ENCODE measurements at regions of chr6 and their contacts with region 1.

Region 1: DNA sequence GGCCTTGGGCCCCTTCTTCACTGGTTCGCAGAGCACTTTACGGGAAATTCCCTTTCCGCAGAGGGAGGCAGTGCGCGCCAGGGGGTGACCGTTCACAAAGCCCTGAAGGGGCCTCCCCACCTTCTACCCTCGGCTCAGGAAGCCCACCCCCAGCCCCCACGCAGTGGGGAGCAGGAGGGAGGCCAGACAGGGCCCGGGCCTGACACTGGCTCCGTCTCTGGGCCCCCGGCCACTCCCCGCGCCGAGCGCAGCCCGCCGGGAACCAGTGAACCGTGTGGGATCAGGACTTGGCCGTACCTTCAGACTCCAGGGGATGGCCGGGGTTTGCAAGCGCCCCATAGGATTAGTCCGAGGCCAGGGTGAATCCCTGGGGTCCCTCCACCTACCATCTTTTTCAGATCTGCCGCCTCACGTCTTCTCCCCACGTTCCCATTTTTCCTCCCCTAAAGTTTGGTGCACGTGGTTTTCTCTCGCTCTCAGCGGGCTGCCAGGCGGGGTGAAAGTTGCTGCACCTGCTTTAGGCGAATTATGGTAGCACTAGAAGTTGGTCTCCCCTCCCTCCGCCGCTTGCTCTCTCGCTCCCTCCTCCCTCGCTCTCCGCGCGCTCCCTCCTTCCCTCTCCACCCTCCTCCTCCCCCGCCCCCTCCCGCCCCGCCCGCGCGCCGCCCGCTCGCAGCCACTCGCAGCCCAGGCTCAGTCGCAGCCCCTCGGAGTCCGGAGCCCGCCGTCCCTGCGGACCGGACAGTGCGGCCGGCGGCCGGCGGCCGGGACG is at the start of gene FOXP4:
- DNase-seq: peak; percentile 89 to 90
- ATAC-seq: peak; percentile 86 to 94 (median 92)
- H3K4me3 ChIP-seq: peak within 1 kb of the TSS; percentile 65 to 97 (median 78)
- H3K27ac ChIP-seq: peak within 1 kb of the TSS; percentile 71 to 87 (median 82)
- H3K4me1 ChIP-seq: peaks cover 11 to 47% (median 32%) of the 10 kb centered on the region in 9 donors
- H3K27me3 ChIP-seq: peaks cover 0 to 46% (median 14%) of the 10 kb centered on the region in 7 donors
- CTCF ChIP-seq: no peak
- total RNA-seq, gene FOXP4: 12.7 to 18.0 (median 13.7) TPM

Region 2: DNA sequence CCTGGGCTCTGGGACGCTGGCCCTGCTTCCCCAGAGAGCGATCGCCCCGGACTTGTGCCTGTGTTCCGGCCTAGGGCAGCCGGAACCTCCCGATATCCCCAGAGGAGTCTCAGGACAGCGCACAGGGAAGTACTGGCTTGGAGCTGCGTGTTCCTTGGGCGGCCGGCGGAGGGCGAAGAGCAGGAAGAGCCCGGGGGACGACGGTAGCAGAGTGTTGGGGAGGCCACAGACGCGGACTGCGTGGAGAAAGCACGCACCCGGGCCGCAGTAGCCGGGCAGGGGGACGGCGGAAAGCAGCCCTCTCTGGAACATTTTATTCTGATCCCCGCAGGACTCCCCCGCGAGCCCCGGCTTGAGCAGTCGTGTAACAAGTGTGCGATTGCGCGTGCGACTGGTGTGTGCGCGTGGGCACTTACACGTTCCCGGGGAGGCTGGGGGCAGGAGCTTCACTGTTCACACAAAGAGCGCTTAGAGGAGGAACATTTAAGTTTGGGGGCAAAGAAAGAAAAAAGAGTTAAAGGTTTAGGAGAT is 174.4 kb before region 1 on chr6:
- intact Hi-C with region 1: no loop called
- DNase-seq: peak; percentile 50 to 55
- ATAC-seq: peak; percentile 57 to 82 (median 76)
- H3K4me3 ChIP-seq: peak overlapping the region in 9 of 10 donors; percentile 16 to 48 (median 41)
- H3K27ac ChIP-seq: peak overlapping the region in 7 of 10 donors; percentile 25 to 77 (median 67)
- H3K4me1 ChIP-seq: peaks cover 5 to 56% (median 45%) of the 10 kb centered on the region in 9 donors
- H3K27me3 ChIP-seq: peaks cover 15 to 97% (median 85%) of the 10 kb centered on the region in 7 donors
- CTCF ChIP-seq: peak in 8 of 9 donors; percentile 5 to 49 (median 31)

Region 3: GRCh38 chr6:41505122-41506049 is 40.5 kb before region 1 on chr6:
- intact Hi-C with region 1: loop called in 1 of 10 experiments (anchors 5 kb)
- DNase-seq: peak; percentile 77
- ATAC-seq: peak; percentile 75 to 84 (median 80)
- H3K4me3 ChIP-seq: peak overlapping the region in 9 of 10 donors; percentile 24 to 54 (median 44)
- H3K27ac ChIP-seq: peak overlapping the region in 9 of 10 donors; percentile 39 to 81 (median 71)
- H3K4me1 ChIP-seq: peaks cover 5 to 34% (median 20%) of the 10 kb centered on the region in 9 donors
- H3K27me3 ChIP-seq: peaks cover 0 to 80% (median 56%) of the 10 kb centered on the region in 7 donors
- CTCF ChIP-seq: no peak

Region 4: DNA sequence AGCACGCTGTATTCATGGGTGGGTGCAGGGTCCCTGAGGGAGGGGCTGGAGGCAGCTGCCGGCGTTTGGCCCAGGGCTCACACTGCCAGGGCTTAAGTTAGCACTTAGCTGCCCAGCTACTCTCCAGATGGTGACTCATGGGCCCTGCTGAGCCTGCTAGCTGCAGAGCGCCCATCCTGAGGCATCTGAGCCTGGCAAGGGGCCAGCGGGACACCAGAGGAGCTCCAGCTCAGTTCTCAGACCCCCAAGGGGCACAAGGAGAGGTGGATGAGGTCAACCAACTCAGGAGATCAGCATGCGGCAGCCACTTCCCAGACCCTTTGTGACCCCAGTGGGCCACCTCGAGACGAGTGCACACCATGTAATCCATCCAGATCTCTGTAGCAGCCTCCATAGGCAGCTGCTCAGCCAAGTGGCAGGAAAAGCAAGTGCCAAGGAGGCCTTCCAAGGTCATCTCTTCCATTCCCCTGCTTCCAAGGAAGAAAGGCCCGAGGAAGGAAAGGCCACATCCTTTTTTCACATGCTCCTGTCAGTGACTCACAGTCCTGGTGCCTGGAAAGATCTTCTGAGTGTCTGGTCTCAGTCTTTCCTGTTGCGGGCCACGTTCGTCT is 35.6 kb after region 1 on chr6:
- intact Hi-C with region 1: loop called in 1 of 10 experiments (anchors 5 kb)
- DNase-seq: peak; percentile 33 to 62
- ATAC-seq: peak in 6 of 8 donors; percentile 22 to 76 (median 56)
- H3K4me3 ChIP-seq: no peak overlapping the region
- H3K27ac ChIP-seq: peak overlapping the region in 2 of 10 donors; percentile 30 to 53
- H3K4me1 ChIP-seq: peaks cover 7 to 72% (median 35%) of the 10 kb centered on the region in 9 donors
- H3K27me3 ChIP-seq: no peaks in the 10 kb centered on the region
- CTCF ChIP-seq: no peak

Region 5: DNA sequence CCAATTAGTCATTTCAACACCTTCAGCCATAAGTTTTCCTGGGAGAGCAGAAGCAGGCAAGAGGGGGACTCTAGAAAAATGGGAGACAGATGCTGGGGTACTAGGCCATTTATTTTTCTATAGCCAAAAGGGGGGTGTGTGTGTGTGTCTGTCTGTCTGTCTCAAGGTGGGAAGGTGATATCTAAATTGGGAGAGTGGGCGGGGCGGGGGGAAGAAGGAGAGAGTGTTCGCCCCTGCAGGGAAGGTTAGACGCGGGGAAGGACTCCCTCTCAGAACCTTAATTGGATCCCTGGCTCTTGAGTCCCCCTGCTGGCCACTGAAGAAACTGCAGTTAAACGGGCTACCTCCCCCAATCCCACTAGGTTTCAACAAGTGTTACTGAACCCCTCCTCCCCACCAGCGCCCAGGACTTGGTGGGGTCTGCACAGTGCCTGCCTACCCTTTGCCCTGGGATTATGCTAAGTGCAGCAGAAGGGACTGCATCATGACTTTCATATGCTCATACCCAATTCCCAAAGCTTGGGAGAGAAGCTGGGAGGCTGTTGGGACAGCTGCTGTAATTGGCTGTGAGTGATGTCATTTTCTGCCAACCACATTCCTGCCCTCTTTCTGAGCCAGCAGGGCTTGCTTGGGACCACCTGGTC is 46.1 kb after region 1 on chr6:
- intact Hi-C with region 1: loop called in 1 of 10 experiments (anchors 5 kb)
- DNase-seq: peak; percentile 72 to 73
- ATAC-seq: peak; percentile 37 to 81 (median 60)
- H3K4me3 ChIP-seq: no peak overlapping the region
- H3K27ac ChIP-seq: no peak overlapping the region
- H3K4me1 ChIP-seq: peaks cover 0 to 8% (median 0%) of the 10 kb centered on the region in 9 donors
- H3K27me3 ChIP-seq: no peaks in the 10 kb centered on the region
- CTCF ChIP-seq: peak; percentile 90 to 97 (median 92)

Region 6: DNA sequence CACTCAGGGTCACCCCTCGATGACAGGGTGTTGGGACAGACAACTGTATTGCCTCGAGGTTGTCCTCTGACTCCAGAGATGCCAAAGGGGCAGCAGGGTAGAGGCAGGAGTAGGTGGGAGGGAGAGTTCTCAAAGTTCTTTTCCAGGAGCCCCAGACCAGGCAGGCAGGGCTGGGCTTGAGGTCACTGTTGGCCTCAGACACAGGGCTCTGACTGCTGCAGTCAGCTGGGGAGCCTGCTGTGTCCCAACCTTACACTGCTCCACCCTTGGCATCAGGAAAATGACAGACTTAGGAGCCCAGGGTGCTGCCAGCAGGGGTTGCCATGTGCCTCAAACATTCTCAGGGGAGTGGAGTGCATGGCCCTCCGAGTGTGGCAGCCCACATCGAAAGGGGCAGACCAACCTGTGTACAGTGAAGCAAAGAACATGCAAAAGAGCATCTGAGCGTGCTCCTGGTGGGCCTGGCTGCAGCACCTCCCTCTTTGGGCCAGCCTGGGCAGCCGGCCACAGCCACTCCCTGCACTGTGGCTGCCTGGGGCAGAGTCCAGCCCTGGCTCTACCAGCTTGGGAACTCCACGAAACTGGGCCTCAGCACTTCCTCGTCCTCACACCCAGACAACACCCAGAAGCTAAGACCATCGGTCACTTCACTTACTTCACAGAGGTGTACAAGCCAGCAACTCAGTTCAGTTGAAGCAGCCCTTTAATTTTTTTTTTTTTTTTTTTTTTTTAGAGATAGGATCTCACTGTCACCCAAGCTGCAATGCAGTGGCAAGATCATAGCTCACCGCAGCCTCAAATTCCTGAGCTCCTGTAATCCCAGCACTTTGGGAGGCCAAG is 572.5 kb after region 1 on chr6:
- intact Hi-C with region 1: no loop called
- DNase-seq: peak; percentile 38 to 53
- ATAC-seq: peak; percentile 82 to 97 (median 90)
- H3K4me3 ChIP-seq: no peak overlapping the region
- H3K27ac ChIP-seq: peak overlapping the region in 8 of 10 donors; percentile 35 to 76 (median 68)
- H3K4me1 ChIP-seq: peaks cover 0 to 13% (median 6%) of the 10 kb centered on the region in 9 donors
- H3K27me3 ChIP-seq: peaks cover 0 to 5% (median 0%) of the 10 kb centered on the region in 7 donors
- CTCF ChIP-seq: no peak

Measured in heart right ventricle (tissue), 16 donors.